ENCODE measurements at regions of chr5 and their contacts with region 1.

Region 1: GRCh38 chr5:34522599-34523386 is 133.3 kb upstream of the RAI14 start:
- DNase-seq: peak; percentile 83
- H3K4me3 Mint-ChIP-seq: no peak overlapping the region
- H3K27ac Mint-ChIP-seq: no peak overlapping the region
- H3K4me1 Mint-ChIP-seq: no peaks in the 10 kb centered on the region
- H3K27me3 Mint-ChIP-seq: peaks cover 6% of the 10 kb centered on the region

Region 2: DNA sequence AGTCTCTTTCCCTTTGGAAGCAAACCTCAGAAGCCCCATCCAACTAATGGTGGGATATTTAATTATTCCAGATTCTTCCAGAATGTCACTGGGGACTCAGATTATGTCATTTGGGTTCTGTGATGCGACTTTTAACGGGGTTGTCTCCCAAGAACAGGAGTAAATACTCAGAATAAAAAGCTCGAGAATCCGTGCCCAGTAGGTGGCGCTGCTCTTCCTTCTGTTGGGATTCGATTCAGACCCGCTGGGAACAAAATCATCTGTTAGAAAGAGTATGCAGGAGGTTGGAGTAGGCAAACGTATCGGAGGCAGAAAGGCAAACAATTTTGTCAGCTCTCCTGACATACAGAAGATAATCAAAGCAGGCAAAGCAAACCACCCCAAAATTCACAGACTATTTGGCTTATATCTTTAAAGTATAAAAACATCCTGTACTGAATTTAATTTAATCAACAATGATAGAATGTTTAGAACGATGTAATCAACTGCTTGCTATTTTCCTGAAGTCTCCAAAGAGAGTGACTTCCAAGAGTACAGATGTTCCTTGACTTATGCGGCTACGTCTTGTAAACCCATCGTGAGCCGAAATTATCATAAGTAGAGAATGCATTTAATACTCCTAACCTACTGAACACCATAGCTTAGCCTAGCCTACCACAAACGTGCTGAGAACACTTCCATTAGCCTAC is 36.5 kb before region 1 on chr5:
- intact Hi-C with region 1: no loop called
- DNase-seq: peak; percentile 87
- H3K4me3 Mint-ChIP-seq: no peak overlapping the region
- H3K27ac Mint-ChIP-seq: no peak overlapping the region
- H3K4me1 Mint-ChIP-seq: peaks cover 4% of the 10 kb centered on the region
- H3K27me3 Mint-ChIP-seq: peaks cover 31% of the 10 kb centered on the region

Region 3: GRCh38 chr5:34838785-34839714 is 316.3 kb after region 1 on chr5 and contains the start of gene TTC23L:
- intact Hi-C with region 1: loop called (anchors 5 kb)
- DNase-seq: peak; percentile 97
- H3K4me3 Mint-ChIP-seq: peak within 1 kb of the TSS; percentile 89
- H3K27ac Mint-ChIP-seq: peak within 1 kb of the TSS; percentile 79
- H3K4me1 Mint-ChIP-seq: peaks cover 12% of the 10 kb centered on the region
- H3K27me3 Mint-ChIP-seq: peaks cover 10% of the 10 kb centered on the region
- total RNA-seq, gene TTC23L: not detected in 2 replicates

Region 4: GRCh38 chr5:34898258-34898895 is 375.6 kb after region 1 on chr5:
- intact Hi-C with region 1: loop called (anchors 1 kb)
- DNase-seq: peak; percentile 86
- H3K4me3 Mint-ChIP-seq: no peak overlapping the region
- H3K27ac Mint-ChIP-seq: no peak overlapping the region
- H3K4me1 Mint-ChIP-seq: no peaks in the 10 kb centered on the region
- H3K27me3 Mint-ChIP-seq: no peaks in the 10 kb centered on the region

Measured in activated CD4-positive, alpha-beta T cell treated with anti-CD3 and anti-CD28 coated beads, Interleukin-2, amount 10 ng/mL, durations not matched to agents 24 days and 14 days (primary cell).